Vagina (tissue), 2 donors: ENCODE measurements at regions of chr18 and their contacts with region 1.

Region 1: DNA sequence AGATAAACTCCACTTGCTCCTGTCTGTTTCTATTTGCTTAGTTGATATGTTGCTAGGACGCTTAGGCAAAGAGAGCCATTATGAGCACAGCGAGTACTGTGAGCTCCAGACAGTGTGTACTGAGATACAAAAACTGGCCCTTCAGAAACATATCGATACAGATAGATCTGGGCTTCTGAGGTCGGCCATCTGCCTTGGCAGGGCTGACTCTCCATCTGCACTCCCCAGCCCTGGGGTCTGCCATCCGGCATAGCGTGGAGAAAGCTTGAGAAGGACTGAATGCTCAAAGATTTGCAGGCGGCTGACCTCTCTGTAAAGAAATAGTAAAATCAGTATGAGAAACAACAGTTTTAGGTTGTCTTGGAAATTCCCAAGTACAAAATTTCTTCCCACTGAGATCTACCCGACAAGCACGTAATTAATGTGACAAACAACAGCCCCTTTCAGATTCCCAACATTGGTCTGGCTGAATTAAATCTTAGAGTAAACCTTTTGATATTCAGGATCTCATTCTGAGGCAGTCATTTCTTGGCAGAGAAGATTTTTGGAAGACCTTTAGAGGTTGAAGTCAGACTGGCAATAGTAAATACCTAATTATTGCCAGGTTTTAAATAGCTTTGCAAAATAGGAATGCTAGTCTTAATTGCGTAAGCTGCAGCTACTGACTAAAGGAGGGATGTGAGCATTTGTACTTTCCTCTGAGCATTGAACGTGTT is 127.4 kb downstream of the CHST9 start:
- DNase-seq: no peak
- H3K4me3 ChIP-seq: no peak overlapping the region
- H3K27ac ChIP-seq: no peak overlapping the region
- H3K4me1 ChIP-seq: no peaks in the 10 kb centered on the region
- H3K27me3 ChIP-seq: no peaks in the 10 kb centered on the region
- CTCF ChIP-seq: no peak
- POLR2A ChIP-seq: no peak

Region 2: DNA sequence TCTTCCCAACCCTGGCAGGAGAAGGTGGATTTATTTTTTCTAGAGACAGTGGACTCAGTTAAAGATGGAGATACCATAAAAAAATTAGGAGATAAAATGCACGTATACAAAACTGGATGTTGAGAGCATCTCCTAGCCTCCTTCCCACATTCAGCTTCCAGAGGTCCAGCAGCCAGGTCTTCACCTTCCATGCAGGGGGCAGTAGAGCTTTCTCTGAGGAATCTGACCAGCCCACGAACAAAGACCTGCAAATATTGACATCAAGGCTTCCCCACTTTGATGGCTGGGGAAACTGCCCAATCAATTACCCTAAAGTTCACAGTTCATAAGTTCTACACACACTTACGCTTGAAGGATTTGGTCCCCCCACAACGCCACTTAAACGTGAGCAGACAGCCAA is 216.7 kb before region 1 on chr18:
- intact Hi-C with region 1: no loop called
- DNase-seq: no peak
- H3K4me3 ChIP-seq: no peak overlapping the region
- H3K27ac ChIP-seq: no peak overlapping the region
- H3K4me1 ChIP-seq: no peaks in the 10 kb centered on the region
- H3K27me3 ChIP-seq: no peaks in the 10 kb centered on the region
- CTCF ChIP-seq: no peak
- POLR2A ChIP-seq: no peak

Region 3: GRCh38 chr18:27081701-27082100 is 24.0 kb after region 1 on chr18:
- intact Hi-C with region 1: loop called (anchors 1 kb)
- DNase-seq: no peak
- H3K4me3 ChIP-seq: no peak overlapping the region
- H3K27ac ChIP-seq: no peak overlapping the region
- H3K4me1 ChIP-seq: no peaks in the 10 kb centered on the region
- H3K27me3 ChIP-seq: no peaks in the 10 kb centered on the region
- CTCF ChIP-seq: no peak
- POLR2A ChIP-seq: no peak

Region 4: DNA sequence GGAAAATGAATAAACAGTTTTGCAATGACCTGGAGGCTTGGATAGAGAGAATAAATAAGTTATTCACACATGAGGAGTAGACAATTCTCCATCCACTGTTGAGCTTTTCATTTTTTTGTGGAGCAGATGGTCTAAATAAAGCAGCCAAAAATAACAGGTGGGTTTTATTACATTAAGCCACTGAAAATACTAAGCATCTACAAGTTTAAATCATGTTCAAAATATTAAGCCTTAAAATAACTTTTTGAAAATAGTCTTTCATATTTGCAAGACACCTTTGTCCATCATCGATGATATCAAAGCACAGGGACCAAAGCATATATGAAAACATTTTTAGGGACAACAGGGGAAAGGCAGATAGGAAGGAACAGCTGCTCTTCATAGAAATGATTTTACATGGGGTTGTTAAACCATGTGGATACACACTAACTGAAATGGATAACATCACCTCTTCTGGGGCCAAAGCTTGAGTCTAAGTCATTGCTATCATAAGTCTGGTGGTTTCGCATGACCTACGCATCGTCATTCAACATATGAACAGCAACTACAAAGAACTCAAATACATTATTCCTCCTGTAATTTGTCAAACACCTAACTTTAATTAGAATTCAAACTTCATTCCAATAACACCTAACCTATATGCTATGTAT is 325.0 kb after region 1 on chr18:
- intact Hi-C with region 1: no loop called
- DNase-seq: no peak
- H3K4me3 ChIP-seq: no peak overlapping the region
- H3K27ac ChIP-seq: no peak overlapping the region
- H3K4me1 ChIP-seq: no peaks in the 10 kb centered on the region
- H3K27me3 ChIP-seq: no peaks in the 10 kb centered on the region
- CTCF ChIP-seq: no peak
- POLR2A ChIP-seq: no peak